ENCODE measurements at regions of chr15 and their contacts with region 1.

Region 1: GRCh38 chr15:45587095-45587860 is at the start of gene BLOC1S6:
- DNase-seq: peak; percentile 91
- ATAC-seq: peak; percentile 97
- H3K4me3 ChIP-seq: peak within 1 kb of the TSS; percentile 81 to 96 (median 82)
- H3K27ac ChIP-seq: peak within 1 kb of the TSS; percentile 97
- H3K4me1 ChIP-seq: peaks cover 33% of the 10 kb centered on the region
- H3K27me3 ChIP-seq: no peaks in the 10 kb centered on the region; a peak in 1 of 5 replicates
- CTCF ChIP-seq: no peak
- EP300 ChIP-seq: 0 out of 4 replicates have a peak, but pooled peaks have one; percentile 8 to 17
- POLR2A ChIP-seq: peak; percentile 79 to 81; a peak in 3 of 4 replicates
- RAD21 ChIP-seq: peak; percentile 29; the same call in 1 of the 2 replicates
- total RNA-seq, gene BLOC1S6: 44.3 and 67.5 TPM in 2 replicates

Region 2: GRCh38 chr15:44598892-44599291 is 988.4 kb before region 1 on chr15:
- CTCF ChIA-PET with region 1: no interaction called
- POLR2A ChIA-PET with region 1: no interaction called
- in situ Hi-C with region 1: no loop called
- intact Hi-C with region 1: no loop called
- DNase-seq: no peak
- ATAC-seq: no peak
- H3K4me3 ChIP-seq: no peak overlapping the region
- H3K27ac ChIP-seq: no peak overlapping the region
- H3K4me1 ChIP-seq: no peaks in the 10 kb centered on the region
- H3K27me3 ChIP-seq: no peaks in the 10 kb centered on the region
- CTCF ChIP-seq: no peak
- EP300 ChIP-seq: no peak
- POLR2A ChIP-seq: no peak
- RAD21 ChIP-seq: no peak

Region 3: DNA sequence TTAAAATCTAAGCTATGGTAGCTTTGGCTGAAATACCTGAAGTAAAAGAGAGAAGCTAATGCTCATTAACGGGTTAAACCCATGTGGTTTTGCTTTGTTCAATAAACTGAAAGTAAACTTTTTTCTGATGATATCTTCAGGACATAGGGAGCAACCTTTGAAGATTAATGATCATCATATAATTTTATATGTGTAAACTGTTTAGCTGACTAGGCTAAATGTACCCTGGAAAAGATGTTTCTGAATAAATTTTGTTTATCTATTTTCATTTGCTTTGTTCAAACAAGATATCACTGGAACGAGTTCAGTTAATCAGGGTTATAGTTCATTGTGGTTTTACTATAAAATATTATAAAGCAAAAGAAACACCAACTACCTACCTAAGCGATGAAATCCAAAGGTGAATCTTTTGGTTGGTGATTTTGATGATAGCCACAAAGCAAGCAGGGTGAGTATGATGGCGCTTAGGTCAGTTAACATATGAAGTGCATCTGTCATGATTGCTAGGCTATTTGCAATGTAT is 76.5 kb before region 1 on chr15:
- CTCF ChIA-PET with region 1: no interaction called
- POLR2A ChIA-PET with region 1: no interaction called
- in situ Hi-C with region 1: no loop called
- intact Hi-C with region 1: no loop called
- DNase-seq: no peak
- ATAC-seq: no peak
- H3K4me3 ChIP-seq: no peak overlapping the region
- H3K27ac ChIP-seq: no peak overlapping the region
- H3K4me1 ChIP-seq: no peaks in the 10 kb centered on the region
- H3K27me3 ChIP-seq: no peaks in the 10 kb centered on the region
- CTCF ChIP-seq: no peak
- EP300 ChIP-seq: no peak
- POLR2A ChIP-seq: no peak
- RAD21 ChIP-seq: no peak

Region 4: GRCh38 chr15:45549541-45550220 is 37.6 kb before region 1 on chr15:
- CTCF ChIA-PET with region 1: no interaction called
- POLR2A ChIA-PET with region 1: interaction called, 20 read pairs
- in situ Hi-C with region 1: no loop called
- intact Hi-C with region 1: no loop called
- DNase-seq: no peak
- ATAC-seq: no peak
- H3K4me3 ChIP-seq: no peak overlapping the region
- H3K27ac ChIP-seq: no peak overlapping the region
- H3K4me1 ChIP-seq: no peaks in the 10 kb centered on the region; the same call in 1 of the 2 replicates
- H3K27me3 ChIP-seq: peaks cover 0 to 3% of the 10 kb centered on the region in 2 experiments; a peak in 2 of 5 replicates
- CTCF ChIP-seq: no peak
- EP300 ChIP-seq: no peak
- POLR2A ChIP-seq: no peak
- RAD21 ChIP-seq: no peak

Region 5: DNA sequence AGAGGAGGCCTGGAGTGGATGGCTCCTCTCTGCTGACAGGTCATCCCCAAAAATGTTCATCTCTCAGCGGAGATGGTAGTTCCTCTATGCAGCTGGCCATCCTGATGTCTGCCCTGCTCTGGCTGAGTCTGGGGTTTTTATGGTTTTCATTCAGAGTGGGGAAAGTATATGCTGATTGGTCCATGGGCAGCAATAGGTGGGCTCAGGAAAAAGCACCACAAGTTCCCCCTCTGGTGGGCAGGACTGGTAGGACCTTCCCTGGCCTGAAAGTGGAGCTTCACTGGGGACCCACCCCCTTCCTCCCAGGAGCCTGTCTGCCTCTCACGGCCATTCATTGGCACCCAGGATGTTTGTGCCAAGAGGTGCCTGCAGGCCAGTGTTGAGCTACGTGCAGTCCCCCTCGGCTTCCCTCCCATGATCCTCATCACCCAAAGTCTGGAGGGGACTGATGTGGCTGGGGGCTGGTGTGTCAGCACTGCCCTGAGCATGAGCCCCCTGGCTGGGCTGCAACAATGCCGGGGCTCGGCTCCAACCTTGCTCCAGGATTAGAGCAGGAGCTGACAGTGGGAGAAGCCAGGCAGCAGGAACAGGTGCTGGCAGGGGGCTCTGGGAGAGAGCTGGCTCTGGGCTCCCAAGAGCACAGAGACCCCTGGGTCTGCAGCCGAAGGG is 13.2 kb before region 1 on chr15:
- CTCF ChIA-PET with region 1: no interaction called
- POLR2A ChIA-PET with region 1: interaction called, 18 read pairs
- in situ Hi-C with region 1: no loop called
- intact Hi-C with region 1: no loop called
- DNase-seq: peak; percentile 61
- ATAC-seq: peak; percentile 99
- H3K4me3 ChIP-seq: peak overlapping the region in 1 of 3 experiments; percentile 63; a peak in 2 of 6 replicates
- H3K27ac ChIP-seq: no peak overlapping the region
- H3K4me1 ChIP-seq: peaks cover 13% of the 10 kb centered on the region
- H3K27me3 ChIP-seq: no peaks in the 10 kb centered on the region
- CTCF ChIP-seq: peak; percentile 74
- EP300 ChIP-seq: no peak
- POLR2A ChIP-seq: no peak
- RAD21 ChIP-seq: no peak

Region 6: DNA sequence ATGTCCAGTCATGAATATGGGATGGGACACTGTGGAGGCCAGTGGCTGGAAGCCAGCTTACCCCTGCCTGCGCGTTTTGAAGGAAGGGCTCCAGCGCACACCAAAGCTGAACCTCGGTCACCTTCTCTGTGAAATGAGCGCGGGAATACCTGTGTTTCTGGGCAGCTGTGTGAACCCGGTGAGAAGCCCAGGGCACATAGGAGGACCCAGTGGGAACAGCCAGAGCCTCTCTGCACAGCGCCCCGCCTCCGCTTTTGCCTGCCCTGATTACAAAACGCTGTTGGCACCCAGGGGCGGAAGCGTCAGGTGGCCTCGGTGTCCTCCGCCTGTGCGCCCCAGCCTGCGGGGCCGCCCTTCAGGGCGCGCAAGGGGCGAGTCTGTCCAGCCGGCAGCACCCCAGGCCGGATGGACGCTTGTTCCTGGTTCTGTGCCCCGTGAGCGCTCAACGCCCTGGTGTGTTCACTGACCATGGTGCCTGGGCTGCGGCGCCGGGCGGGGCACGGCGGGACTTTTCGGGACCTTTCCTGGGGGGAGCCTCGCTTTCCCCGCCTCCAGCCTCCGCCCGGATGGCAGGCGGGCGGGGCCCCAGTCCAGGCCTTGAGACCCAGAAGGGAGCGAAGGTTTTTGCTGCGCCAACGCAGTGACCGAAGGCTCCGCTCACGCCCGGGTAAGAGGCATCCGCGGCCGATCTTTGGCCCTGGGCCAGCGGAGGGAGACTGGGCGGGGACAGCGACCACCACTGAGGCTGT is 47.3 kb after region 1 on chr15 and contains the start of gene SQOR:
- CTCF ChIA-PET with region 1: no interaction called
- POLR2A ChIA-PET with region 1: interaction called, 14 read pairs
- in situ Hi-C with region 1: no loop called
- intact Hi-C with region 1: loop called (anchors 10 kb)
- DNase-seq: peak; percentile 68
- ATAC-seq: peak; percentile 88
- H3K4me3 ChIP-seq: peak within 1 kb of the TSS; percentile 72 to 90 (median 89)
- H3K27ac ChIP-seq: peak within 1 kb of the TSS; percentile 61
- H3K4me1 ChIP-seq: peaks cover 27% of the 10 kb centered on the region
- H3K27me3 ChIP-seq: no peaks in the 10 kb centered on the region; a peak in 1 of 5 replicates
- CTCF ChIP-seq: peak; percentile 46
- EP300 ChIP-seq: peak in 1 of 2 experiments; percentile 36; a peak in 1 of 4 replicates
- POLR2A ChIP-seq: peak; percentile 68 to 73
- RAD21 ChIP-seq: no peak
- total RNA-seq, gene SQOR: 19.4 and 25.9 TPM in 2 replicates

Region 7: DNA sequence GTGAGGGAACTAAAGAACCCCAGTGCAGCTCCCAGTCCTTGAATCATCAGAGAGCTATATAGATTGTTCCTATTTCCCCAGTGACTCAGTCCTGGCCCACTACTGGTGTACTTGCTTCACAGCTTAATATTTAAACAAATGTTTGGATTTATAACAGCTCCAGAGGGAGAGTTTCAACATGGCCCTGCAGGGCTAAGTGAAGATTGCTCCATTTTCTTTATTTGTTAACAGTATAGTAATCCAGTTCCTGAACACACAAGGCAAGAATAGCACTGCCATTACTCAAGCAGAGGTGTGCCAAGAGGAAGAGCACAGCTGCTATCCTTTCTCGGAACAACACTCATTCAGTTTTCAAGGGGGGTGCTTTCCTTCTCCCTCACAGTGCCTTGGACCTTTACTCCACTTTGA is 54.1 kb after region 1 on chr15:
- CTCF ChIA-PET with region 1: interaction called, 3 read pairs
- POLR2A ChIA-PET with region 1: interaction called, 13 read pairs
- in situ Hi-C with region 1: no loop called
- intact Hi-C with region 1: loop called (anchors 10 kb)
- DNase-seq: peak; percentile 95
- ATAC-seq: peak; percentile 98
- H3K4me3 ChIP-seq: peak overlapping the region; percentile 9 to 42 (median 31); a peak in 3 of 6 replicates
- H3K27ac ChIP-seq: peak overlapping the region; percentile 69
- H3K4me1 ChIP-seq: peaks cover 75% of the 10 kb centered on the region
- H3K27me3 ChIP-seq: no peaks in the 10 kb centered on the region
- CTCF ChIP-seq: no peak
- EP300 ChIP-seq: peak; percentile 43 to 82; a peak in 2 of 4 replicates
- POLR2A ChIP-seq: no peak
- RAD21 ChIP-seq: 0 out of 2 replicates have a peak, but pooled peaks have one; percentile 11

Measured in HepG2 (cell line).